Activated CD8-positive, alpha-beta T cell treated with anti-CD3 and anti-CD28 coated beads for 36 hours (primary cell): ENCODE measurements at regions of chr3 and their contacts with region 1.

Region 1: DNA sequence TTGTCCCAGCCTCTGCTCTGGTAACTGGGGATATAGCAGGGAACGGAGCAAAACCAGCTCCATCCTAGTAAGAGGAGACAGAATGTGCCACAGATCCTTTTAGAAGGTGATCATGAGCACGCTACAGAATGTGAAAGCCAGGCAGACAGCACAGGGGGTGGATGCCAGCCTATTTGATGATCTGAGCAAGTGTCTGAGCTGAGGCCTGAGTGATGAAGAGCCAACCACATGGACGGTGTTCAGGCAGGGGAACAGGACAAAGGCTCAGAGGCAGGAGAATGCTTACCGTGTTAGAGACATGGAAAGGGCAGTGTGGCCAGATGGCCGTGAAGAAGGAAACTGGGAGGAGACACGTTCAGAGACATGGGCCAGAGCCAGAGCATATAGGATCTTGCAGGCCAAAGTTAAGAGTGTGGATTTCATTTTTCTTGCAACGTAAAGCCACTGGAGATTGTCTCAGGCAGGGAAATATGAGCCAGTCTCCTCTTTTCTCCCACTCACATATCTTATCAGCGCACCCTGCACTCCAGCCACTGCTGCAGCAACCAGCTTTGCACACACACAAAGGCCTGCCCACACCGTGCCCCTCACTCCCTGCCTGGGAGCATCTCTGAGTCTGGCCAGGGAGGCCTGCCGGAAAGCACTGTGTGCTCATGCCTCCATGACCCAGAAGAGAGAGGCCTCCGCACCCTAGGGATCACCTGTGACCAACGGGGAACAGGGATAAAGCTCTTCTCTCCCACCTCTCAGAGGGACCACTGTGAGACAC is 20.1 kb downstream of the RAB43 start:
- DNase-seq: no peak
- ATAC-seq: no peak
- H3K4me3 Mint-ChIP-seq: no peak overlapping the region
- H3K27ac Mint-ChIP-seq: peak overlapping the region; percentile 65
- H3K4me1 Mint-ChIP-seq: peaks cover 70% of the 10 kb centered on the region
- H3K27me3 Mint-ChIP-seq: no peaks in the 10 kb centered on the region
- CTCF ChIP-seq: no peak

Region 2: DNA sequence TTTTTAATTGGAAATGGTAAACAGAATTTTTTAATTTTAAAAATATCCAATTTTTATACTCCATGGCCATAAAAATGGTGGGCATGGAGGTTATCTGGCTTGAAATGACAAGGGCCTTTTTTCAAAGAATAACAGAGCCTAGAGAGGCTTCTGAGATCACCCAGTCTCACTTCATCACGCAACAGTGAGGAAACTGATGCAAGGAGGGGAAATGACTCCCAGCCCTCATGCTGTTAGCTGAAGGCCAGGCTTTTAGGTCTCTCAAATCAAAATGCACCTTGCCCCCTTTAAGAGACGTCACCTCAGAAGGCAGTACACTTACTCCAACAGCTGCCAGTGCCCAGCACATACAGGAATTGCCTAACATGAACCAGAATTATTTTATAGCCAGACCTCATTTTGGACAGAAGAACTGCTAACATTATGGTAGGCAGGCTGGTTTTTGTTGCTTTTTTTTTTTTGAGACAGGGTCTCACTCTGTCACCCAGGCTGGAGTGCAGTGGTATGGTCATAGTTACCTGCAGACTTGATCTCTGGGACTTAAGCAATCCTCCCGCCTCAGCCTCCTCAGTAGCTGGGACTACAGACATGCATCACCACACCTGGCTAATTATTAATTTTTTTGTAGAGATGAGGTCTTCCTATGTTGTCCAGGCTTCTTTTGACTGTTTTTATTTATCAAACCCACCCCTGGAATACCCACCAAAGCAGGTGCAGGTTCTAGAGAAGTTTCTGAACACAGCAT is 10.9 kb after region 1 on chr3:
- CTCF ChIA-PET with region 1: interaction called, 7 read pairs
- POLR2A ChIA-PET with region 1: interaction called, 163 read pairs
- intact Hi-C with region 1: no loop called
- DNase-seq: peak; percentile 86
- ATAC-seq: peak; percentile 85
- H3K4me3 Mint-ChIP-seq: peak overlapping the region; percentile 69
- H3K27ac Mint-ChIP-seq: peak overlapping the region; percentile 97
- H3K4me1 Mint-ChIP-seq: peaks cover 78% of the 10 kb centered on the region
- H3K27me3 Mint-ChIP-seq: no peaks in the 10 kb centered on the region
- CTCF ChIP-seq: no peak